Left ventricle myocardium inferior (tissue), 1 donor: ENCODE measurements at regions of chr19 and their contacts with region 1.

Region 1: DNA sequence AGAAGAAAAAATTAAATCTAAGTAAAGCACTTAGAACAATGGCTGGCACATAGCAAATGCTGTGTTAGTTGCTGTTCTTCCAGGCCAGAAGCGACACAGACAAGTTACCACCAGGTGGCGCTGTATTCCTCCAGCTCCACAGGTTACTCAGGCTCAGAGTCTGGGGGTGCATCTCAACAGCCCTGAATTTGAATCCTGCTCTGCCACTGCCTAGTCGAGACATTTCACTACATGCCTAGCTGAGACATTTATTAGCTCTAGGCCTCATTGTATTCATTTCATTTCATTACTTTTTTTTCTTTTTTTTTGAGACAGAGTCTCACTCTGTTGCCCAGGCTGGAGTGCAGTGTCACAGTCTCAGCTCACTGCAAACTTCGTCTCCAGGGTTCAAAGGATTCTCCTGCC is 16.4 kb upstream of the CYP2B6 start:
- DNase-seq: peak; percentile 51
- H3K4me3 ChIP-seq: no peak overlapping the region
- H3K27ac ChIP-seq: no peak overlapping the region
- H3K4me1 ChIP-seq: no peaks in the 10 kb centered on the region
- H3K27me3 ChIP-seq: peaks cover 78% of the 10 kb centered on the region
- CTCF ChIP-seq: peak; percentile 92

Region 2: DNA sequence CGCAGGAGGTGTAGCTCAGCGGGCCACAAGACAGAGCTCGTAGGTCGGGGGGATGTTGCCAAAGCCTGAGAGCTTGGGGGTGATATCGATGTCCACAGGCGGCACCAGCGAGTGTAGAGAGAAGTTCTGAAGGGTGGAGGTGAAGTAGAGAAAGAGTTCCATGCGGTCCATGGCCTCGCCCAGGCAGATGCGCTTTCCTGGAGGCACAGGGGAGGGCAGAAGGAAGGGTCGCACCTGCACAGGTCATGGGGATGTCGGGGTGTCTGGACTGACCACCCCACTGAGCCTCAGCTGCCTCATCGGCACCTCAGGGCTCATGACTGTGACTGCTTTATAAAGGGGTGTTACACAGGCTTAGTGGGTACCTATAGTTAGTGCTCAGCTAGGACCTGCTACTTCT is 75.8 kb after region 1 on chr19:
- intact Hi-C with region 1: no loop called
- DNase-seq: no peak
- H3K4me3 ChIP-seq: no peak overlapping the region
- H3K27ac ChIP-seq: no peak overlapping the region
- H3K4me1 ChIP-seq: no peaks in the 10 kb centered on the region
- H3K27me3 ChIP-seq: peaks cover 72% of the 10 kb centered on the region
- CTCF ChIP-seq: no peak

Region 3: GRCh38 chr19:41089955-41090354 is 115.3 kb after region 1 on chr19:
- intact Hi-C with region 1: no loop called
- DNase-seq: no peak
- H3K4me3 ChIP-seq: no peak overlapping the region
- H3K27ac ChIP-seq: no peak overlapping the region
- H3K4me1 ChIP-seq: no peaks in the 10 kb centered on the region
- H3K27me3 ChIP-seq: peaks cover 87% of the 10 kb centered on the region
- CTCF ChIP-seq: no peak

Region 4: GRCh38 chr19:41144403-41144802 is 169.8 kb after region 1 on chr19:
- intact Hi-C with region 1: loop called (anchors 5 kb)
- DNase-seq: peak; percentile 74
- H3K4me3 ChIP-seq: no peak overlapping the region
- H3K27ac ChIP-seq: no peak overlapping the region
- H3K4me1 ChIP-seq: no peaks in the 10 kb centered on the region
- H3K27me3 ChIP-seq: peaks cover 30% of the 10 kb centered on the region
- CTCF ChIP-seq: peak; percentile 86